HAP-1 (cell line): ENCODE measurements at regions of chr17 and their contacts with region 1.

Region 1: DNA sequence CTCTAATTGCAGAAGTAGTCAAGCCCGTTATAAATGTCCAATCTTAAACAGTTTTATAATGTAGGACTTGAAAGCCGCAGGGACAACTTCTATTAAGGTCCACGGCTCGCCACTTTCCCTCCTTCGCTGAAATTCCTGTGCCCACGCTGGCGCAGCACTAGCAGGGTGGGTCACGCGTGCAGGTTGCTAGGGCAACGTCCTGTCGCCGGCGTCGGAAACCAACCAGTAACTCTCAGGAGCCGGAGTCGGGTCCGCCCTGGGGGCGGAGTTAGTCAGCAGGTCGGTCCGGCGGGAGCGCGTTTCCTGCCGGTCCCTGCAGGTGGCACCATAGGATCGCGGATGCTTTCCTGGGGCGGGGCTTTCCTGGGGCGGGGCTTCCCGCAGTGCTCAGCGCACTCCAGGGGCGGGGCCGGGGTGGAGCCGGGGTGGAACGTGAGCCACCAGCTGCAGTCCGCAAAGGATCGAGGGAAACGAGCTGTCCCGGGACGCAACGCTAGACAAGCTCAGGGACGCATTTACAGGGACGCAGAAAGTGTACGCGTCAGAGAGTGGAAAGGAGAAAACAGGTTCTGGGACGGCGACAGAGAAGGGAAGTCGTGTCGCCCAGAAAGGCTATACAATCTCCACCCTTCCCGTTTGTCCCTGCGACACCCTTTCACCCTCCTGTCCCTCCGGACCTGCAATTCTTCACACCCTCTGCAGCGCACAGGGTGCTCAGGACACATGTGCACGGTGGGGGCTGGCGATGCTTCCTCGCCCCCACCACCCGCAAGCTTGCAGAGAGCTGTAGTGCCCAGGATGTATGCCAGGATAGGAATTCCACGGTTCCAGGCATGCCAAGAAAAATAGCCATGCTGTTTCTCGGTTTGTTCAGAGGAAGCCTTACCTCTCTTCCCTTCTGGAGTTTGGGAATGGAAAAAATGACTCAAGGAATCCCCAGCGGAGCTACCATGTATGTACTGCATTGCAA is 12.4 kb downstream of the COPZ2 start:
- DNase-seq: peak; percentile 94 to 99
- H3K4me3 ChIP-seq: peak overlapping the region; percentile 26
- H3K4me1 ChIP-seq: peaks cover 30% of the 10 kb centered on the region
- H3K27me3 ChIP-seq: no peaks in the 10 kb centered on the region

Region 2: GRCh38 chr17:48068491-48068961 is 43.3 kb after region 1 on chr17:
- in situ Hi-C with region 1: loop called (anchors 5 kb)
- DNase-seq: no peak
- H3K4me3 ChIP-seq: no peak overlapping the region
- H3K4me1 ChIP-seq: peaks cover 8% of the 10 kb centered on the region
- H3K27me3 ChIP-seq: no peaks in the 10 kb centered on the region

Region 3: DNA sequence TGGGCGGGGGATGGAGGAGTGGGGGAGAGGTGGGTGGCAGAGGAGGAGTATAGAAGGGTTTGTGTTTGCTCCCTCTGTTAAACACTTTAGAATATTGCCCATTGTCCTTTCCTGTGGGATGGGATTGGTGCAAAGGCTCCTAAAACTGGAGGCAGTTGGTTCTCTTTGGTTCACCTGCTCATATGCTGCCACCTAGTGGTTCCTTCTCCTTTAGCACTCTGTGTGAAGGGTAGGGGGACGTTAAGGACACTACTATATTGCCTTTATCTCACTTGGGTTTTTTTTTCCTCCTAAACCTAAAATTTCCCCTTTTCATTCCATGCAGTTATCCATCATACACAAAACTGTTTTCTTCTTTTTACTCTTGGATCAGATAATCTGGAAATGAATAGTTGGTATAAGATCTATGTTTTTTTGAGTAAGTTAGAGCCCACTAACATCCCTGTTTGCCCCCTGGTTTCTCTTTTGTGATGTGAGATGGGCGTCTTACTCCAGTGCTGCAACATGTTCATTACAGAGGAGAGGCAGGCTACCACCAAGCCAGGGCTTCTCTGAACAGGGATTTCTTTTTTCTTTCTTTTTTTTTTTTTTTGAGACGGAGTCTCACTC is 106.1 kb after region 1 on chr17:
- in situ Hi-C with region 1: loop called (anchors 5 kb)
- DNase-seq: peak; percentile 78 to 86
- H3K4me3 ChIP-seq: no peak overlapping the region
- H3K4me1 ChIP-seq: no peaks in the 10 kb centered on the region
- H3K27me3 ChIP-seq: peaks cover 3% of the 10 kb centered on the region; the same call in 1 of the 2 replicates

Region 4: GRCh38 chr17:48624544-48625494 is 599.6 kb after region 1 on chr17:
- in situ Hi-C with region 1: loop called (anchors 5 kb)
- DNase-seq: peak; percentile 19 to 58
- H3K4me3 ChIP-seq: peak overlapping the region; percentile 39
- H3K4me1 ChIP-seq: no peaks in the 10 kb centered on the region
- H3K27me3 ChIP-seq: peaks cover 85% of the 10 kb centered on the region